ENCODE measurements at regions of chr5 and their contacts with region 1.

Region 1: GRCh38 chr5:170225326-170226128 is 7.3 kb upstream of the C5orf58 start:
- DNase-seq: peak; percentile 79 to 86
- H3K4me3 ChIP-seq: no peak overlapping the region
- H3K27ac ChIP-seq: peak overlapping the region; percentile 78
- H3K4me1 ChIP-seq: no peaks in the 10 kb centered on the region
- H3K27me3 ChIP-seq: no peaks in the 10 kb centered on the region
- CTCF ChIP-seq: peak; percentile 63 to 75 (median 72)
- POLR2A ChIP-seq: no peak

Region 2: GRCh38 chr5:170302653-170303501 is 77.3 kb after region 1 on chr5:
- intact Hi-C with region 1: no loop called
- DNase-seq: peak; percentile 58 to 79
- H3K4me3 ChIP-seq: no peak overlapping the region
- H3K27ac ChIP-seq: peak overlapping the region; percentile 40 to 49
- H3K4me1 ChIP-seq: peaks cover 0 to 15% of the 10 kb centered on the region in 2 donors
- H3K27me3 ChIP-seq: no peaks in the 10 kb centered on the region
- CTCF ChIP-seq: no peak
- POLR2A ChIP-seq: no peak

Region 3: DNA sequence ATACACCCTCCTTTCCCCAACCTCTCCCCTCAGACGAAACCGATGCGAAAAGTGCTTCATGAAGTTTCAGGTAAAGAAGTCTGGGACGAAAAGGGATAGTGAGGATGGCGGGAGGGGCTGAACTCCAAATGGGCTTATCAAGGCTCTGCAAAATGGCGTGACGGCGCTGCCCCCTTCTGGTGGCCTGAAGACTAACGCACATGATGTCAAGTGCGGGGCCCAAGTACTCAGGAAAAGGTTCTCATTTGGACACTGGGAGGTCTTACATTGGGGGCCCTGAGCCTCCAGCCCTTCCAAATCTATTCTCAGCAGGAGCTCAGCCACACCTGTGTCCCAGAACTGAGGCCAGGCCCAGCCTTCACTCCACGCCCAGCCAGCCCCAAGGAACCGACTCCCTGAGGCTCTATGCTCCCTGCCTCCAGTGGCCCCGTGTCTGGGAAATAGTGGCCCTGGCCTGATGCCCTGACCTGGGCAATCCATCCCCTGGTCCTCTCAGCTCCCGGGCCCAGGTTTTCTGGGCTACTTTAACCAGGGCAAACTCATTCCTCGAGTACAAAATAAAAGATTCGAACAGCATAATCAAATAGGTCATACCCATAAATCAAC is 398.2 kb after region 1 on chr5:
- intact Hi-C with region 1: loop called (anchors 10 kb)
- DNase-seq: no peak
- H3K4me3 ChIP-seq: no peak overlapping the region
- H3K27ac ChIP-seq: no peak overlapping the region
- H3K4me1 ChIP-seq: no peaks in the 10 kb centered on the region
- H3K27me3 ChIP-seq: no peaks in the 10 kb centered on the region
- CTCF ChIP-seq: peak; percentile 19 to 58 (median 36)
- POLR2A ChIP-seq: no peak